ENCODE measurements at regions of chr11 and their contacts with region 1.

Region 1: DNA sequence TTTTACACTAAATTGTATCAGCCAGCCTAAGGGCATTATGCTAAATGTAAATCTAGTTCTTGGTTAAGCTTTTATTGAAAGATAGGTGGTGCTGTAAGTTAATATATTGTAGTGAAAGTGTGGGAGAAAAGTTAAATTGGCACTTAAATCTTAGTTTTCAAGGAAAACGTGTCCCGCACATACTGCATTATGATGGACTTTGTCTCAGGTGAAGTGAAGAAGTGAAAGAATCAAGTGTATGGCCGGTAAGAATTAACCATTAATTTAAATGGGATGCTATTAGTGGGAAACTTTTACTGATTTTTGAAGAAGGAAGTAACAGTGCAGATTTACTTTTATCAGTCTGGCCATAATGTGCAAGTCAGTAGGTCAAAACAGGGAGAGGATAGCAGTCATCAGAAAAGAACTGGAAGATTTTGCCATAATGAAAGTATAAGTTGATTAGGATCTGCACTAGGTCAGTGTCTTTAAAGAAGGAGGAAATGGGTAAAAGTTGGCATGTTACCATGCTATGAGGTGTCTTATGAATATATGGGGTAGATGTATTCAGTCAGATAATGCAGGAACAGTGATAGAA is 81.6 kb downstream of the PDHX start:
- DNase-seq: peak; percentile 27 to 70 (median 57)
- H3K4me3 ChIP-seq: peak overlapping the region in 2 of 7 experiments; percentile 2 to 23
- H3K27ac ChIP-seq: no peak overlapping the region
- H3K4me1 ChIP-seq: peaks cover 8 to 25% (median 15%) of the 10 kb centered on the region in 4 experiments
- H3K27me3 ChIP-seq: no peaks in the 10 kb centered on the region

Region 2: DNA sequence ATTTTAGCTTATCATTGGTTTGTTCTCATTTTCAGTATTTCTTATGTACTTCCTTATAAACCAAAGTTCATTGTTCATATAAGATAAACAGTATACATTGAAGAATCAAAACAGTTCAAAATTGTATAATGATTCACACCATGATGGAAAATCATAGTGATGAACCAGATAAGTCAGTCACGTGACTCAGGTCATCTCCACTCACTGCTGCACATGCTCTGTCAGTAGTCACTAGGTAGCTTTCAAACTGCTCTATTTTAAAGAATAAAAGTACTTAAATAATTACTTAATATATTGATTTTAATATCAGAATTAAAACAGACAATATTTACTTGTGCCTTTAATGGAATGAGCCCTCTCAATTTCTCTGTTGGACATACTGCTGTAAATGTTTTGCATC is 44.1 kb before region 1 on chr11:
- CTCF ChIA-PET with region 1: no interaction called
- POLR2A ChIA-PET with region 1: no interaction called
- DNase-seq: no peak
- H3K4me3 ChIP-seq: no peak overlapping the region
- H3K27ac ChIP-seq: no peak overlapping the region
- H3K4me1 ChIP-seq: no peaks in the 10 kb centered on the region
- H3K27me3 ChIP-seq: no peaks in the 10 kb centered on the region

Region 3: GRCh38 chr11:35009191-35009940 is 11.3 kb after region 1 on chr11:
- CTCF ChIA-PET with region 1: interaction called, 13 read pairs
- POLR2A ChIA-PET with region 1: no interaction called
- DNase-seq: no peak
- H3K4me3 ChIP-seq: no peak overlapping the region
- H3K27ac ChIP-seq: no peak overlapping the region
- H3K4me1 ChIP-seq: peaks cover 2 to 10% (median 7%) of the 10 kb centered on the region in 4 experiments
- H3K27me3 ChIP-seq: no peaks in the 10 kb centered on the region

Region 4: GRCh38 chr11:35030716-35031213 is 32.7 kb after region 1 on chr11:
- CTCF ChIA-PET with region 1: interaction called, 11 read pairs
- POLR2A ChIA-PET with region 1: no interaction called
- DNase-seq: peak in 2 of 3 donors; percentile 67 to 76
- H3K4me3 ChIP-seq: no peak overlapping the region
- H3K27ac ChIP-seq: no peak overlapping the region
- H3K4me1 ChIP-seq: peaks cover 0 to 41% (median 27%) of the 10 kb centered on the region in 4 experiments
- H3K27me3 ChIP-seq: no peaks in the 10 kb centered on the region

Region 5: GRCh38 chr11:35050541-35050995 is 52.5 kb after region 1 on chr11:
- CTCF ChIA-PET with region 1: interaction called, 12 read pairs
- POLR2A ChIA-PET with region 1: interaction called, 5 read pairs
- DNase-seq: peak in 2 of 3 donors; percentile 68 to 80
- H3K4me3 ChIP-seq: peak overlapping the region in 3 of 7 experiments; percentile 1 to 27 (median 25)
- H3K27ac ChIP-seq: peak overlapping the region; percentile 11 to 71
- H3K4me1 ChIP-seq: peaks cover 29 to 60% (median 48%) of the 10 kb centered on the region in 4 experiments
- H3K27me3 ChIP-seq: no peaks in the 10 kb centered on the region